Dendritic cell treated with granulocyte-macrophage colony-stimulating factor and Interleukin-4, amounts not matched to agents 40 ng/mL and 50 ng/mL, for 4 days (primary cell): ENCODE measurements at regions of chr19 and their contacts with region 1.

Region 1: GRCh38 chr19:19900729-19901444 is at the start of gene ZNF93:
- H3K4me3 Mint-ChIP-seq: peak within 1 kb of the TSS; percentile 98
- H3K27ac Mint-ChIP-seq: peak within 1 kb of the TSS; percentile 97
- H3K4me1 Mint-ChIP-seq: peaks cover 26% of the 10 kb centered on the region
- H3K27me3 Mint-ChIP-seq: no peaks in the 10 kb centered on the region

Region 2: DNA sequence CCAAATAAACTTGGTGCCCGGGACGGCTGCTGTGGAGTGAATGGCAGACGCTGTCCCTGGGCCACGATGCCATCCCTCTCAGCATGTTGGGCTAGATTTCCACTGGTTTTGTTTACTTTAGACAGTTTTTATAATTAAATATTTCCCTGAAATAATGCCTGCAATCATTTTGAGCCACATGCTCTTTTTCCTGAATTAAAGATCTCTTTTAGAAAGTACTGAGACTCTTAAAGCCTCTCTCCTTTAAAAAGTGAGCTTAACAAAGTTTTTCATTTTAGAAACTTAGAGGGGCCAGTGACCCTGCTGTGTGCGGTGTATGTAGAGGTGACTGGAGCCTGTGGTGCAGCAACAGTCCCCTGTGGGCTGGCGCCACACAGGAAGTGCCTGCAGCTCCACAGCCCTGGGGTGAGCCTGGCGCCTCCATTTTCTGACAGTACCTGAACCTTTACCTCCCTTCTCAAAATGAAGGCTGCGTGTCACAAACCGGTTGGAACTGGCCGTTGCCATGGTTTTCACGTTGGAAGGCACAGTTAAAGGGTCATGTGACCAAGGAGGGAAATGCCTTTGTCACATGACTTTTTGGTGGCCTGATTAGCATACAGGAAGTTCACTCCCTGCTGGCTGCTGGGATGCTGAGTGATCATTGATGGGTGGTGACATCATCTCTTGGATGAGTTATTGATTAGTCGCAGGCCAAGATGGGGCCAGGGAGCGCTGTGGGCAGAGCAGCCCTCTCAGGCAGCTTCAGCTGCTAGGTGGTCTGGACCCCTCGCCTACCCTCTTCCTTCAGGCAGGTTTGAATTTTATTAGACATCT is 411.8 kb before region 1 on chr19:
- intact Hi-C with region 1: no loop called
- H3K4me3 Mint-ChIP-seq: peak overlapping the region; percentile 42
- H3K27ac Mint-ChIP-seq: peak overlapping the region; percentile 88
- H3K4me1 Mint-ChIP-seq: peaks cover 54% of the 10 kb centered on the region
- H3K27me3 Mint-ChIP-seq: no peaks in the 10 kb centered on the region

Region 3: DNA sequence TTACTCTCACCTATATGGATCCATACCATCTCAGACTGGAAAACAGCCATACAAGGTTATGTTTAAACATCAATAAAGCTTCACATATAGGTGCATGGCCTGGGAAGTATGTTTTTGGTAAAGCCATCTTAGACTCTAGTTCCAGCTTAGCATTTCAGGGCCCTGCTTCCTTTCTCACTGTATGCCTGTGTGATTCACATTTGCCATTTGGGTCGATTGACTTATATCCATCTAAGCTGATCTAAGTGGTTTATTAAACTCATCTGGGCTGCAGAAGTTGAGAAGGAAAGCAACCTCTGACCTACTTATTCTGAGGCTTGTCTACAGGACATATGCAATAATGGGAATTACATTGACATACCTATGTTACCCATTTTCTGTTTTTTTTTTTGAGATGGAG is 112.9 kb before region 1 on chr19:
- intact Hi-C with region 1: loop called (anchors 10 kb)
- H3K4me3 Mint-ChIP-seq: no peak overlapping the region
- H3K27ac Mint-ChIP-seq: no peak overlapping the region
- H3K4me1 Mint-ChIP-seq: no peaks in the 10 kb centered on the region
- H3K27me3 Mint-ChIP-seq: no peaks in the 10 kb centered on the region

Region 4: GRCh38 chr19:19865739-19866481 is 35.0 kb before region 1 on chr19 and contains the start of gene ZNF253:
- intact Hi-C with region 1: loop called (anchors 1 kb)
- H3K4me3 Mint-ChIP-seq: peak within 1 kb of the TSS; percentile 85
- H3K27ac Mint-ChIP-seq: peak within 1 kb of the TSS; percentile 99
- H3K4me1 Mint-ChIP-seq: peaks cover 12% of the 10 kb centered on the region
- H3K27me3 Mint-ChIP-seq: peaks cover under 1% of the 10 kb centered on the region